Heart right ventricle (tissue), 16 donors: ENCODE measurements at regions of chr10 and their contacts with region 1.

Region 1: DNA sequence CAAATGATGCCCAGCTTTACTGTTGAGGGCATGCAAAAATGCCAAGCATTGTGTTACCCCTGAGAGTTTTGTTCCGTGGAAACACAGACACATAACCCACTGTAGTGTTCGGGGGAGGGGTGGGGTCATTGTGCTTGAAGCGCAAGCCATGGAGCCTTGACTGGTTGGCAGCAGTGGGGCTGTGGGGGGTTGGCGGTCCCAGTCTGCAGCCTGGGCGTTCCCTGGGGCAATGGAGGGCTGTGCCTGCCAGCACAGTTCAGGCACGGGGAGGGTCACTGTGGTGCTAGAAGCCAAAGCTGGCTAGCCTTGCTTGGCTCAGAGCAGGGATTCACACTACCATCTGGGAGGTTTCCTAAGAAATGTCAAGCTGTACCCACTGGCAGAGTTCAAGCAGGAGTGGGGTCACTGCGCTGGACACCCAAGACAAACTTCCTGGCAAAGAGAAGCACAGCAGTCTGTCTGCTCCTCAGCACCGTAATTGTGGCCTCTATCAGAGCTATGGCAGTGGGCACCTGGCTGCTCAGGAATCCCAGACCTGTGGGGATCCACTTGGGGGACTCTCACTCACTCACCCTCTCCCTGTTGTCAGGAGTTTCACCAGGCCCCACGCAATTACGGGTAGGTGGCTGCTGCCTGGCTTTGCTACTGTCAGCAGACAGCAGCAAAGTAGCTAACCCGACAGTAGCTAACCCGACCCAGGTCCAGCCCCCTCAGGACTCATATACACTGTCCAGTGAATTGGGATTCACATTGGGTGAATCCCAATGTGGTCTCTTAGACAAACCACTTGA is 292.4 kb downstream of the ZWINT start:
- DNase-seq: no peak
- ATAC-seq: no peak
- H3K4me3 ChIP-seq: no peak overlapping the region
- H3K27ac ChIP-seq: no peak overlapping the region
- H3K4me1 ChIP-seq: no peaks in the 10 kb centered on the region
- H3K27me3 ChIP-seq: no peaks in the 10 kb centered on the region
- CTCF ChIP-seq: no peak

Region 2: GRCh38 chr10:57217974-57218760 is 1149.5 kb after region 1 on chr10:
- intact Hi-C with region 1: no loop called
- DNase-seq: no peak
- ATAC-seq: no peak
- H3K4me3 ChIP-seq: no peak overlapping the region
- H3K27ac ChIP-seq: no peak overlapping the region
- H3K4me1 ChIP-seq: no peaks in the 10 kb centered on the region
- H3K27me3 ChIP-seq: no peaks in the 10 kb centered on the region
- CTCF ChIP-seq: no peak

Region 3: DNA sequence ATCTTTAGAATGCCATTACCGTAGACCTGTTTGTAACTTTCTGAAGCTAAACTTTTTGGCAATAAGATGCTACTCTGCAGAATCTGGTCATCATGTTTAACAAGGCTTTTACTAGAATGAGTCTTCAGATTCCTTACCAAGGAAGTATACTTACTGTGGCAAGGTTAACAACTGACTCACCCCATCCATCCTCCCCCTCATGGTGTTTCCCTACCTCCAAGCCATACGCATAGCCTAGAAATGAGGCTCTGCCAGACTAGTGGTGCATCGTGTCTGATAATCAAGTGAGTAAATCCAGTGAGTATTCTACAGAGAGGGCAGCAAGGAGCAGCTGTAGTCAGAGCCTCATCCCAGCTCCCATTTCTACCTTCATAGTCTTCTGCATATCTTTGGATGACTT is 1975.4 kb after region 1 on chr10:
- intact Hi-C with region 1: loop called in 1 of 10 experiments (anchors 10 kb)
- DNase-seq: no peak
- ATAC-seq: no peak
- H3K4me3 ChIP-seq: no peak overlapping the region
- H3K27ac ChIP-seq: no peak overlapping the region
- H3K4me1 ChIP-seq: no peaks in the 10 kb centered on the region
- H3K27me3 ChIP-seq: no peaks in the 10 kb centered on the region
- CTCF ChIP-seq: no peak